Vagina (tissue), 2 donors: ENCODE measurements at regions of chr13 and their contacts with region 1.

Region 1: DNA sequence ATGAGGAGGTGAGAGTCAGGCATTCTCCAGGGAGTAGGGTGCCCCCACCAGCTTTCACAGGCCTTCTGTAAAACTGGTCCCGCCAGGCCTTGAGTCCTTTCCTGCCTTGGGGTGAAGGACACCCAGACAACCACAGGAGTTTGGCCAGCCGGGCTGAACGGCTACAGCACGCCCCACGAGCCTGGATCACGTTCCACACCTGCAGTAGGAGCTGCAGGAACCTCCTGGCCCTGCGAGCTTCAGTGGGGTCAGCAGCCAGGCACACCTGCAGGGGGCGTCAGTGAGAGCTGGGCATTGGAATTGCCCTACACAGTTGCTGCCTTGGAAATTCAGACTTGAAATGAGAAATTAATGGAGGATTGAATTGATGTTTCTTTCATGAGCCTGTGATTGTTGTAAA is 45.7 kb downstream of the COL4A2 start:
- DNase-seq: no peak
- H3K4me3 ChIP-seq: no peak overlapping the region
- H3K27ac ChIP-seq: no peak overlapping the region
- H3K4me1 ChIP-seq: peaks cover 11% of the 10 kb centered on the region
- H3K27me3 ChIP-seq: no peaks in the 10 kb centered on the region
- CTCF ChIP-seq: no peak
- POLR2A ChIP-seq: no peak

Region 2: DNA sequence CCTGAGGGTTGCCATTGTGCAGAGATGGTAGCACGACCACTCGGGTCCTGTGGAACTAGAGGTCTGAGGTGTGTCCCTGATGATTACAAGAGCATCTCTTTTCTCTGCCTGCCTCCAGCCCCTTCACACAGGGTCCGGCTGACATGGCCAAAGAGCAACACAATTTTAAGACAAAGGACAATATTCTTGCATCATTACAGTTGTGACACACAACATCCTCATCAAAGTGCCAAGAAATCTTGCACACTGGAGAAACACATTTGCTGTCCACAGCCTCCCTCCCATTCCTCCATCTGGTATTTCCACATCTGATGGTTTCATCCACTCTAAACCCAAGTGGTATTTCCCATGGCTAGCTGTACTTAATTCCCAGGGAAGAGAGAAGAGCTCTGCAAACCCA is 58.6 kb before region 1 on chr13:
- intact Hi-C with region 1: no loop called
- DNase-seq: no peak
- H3K4me3 ChIP-seq: no peak overlapping the region
- H3K27ac ChIP-seq: no peak overlapping the region
- H3K4me1 ChIP-seq: peaks cover 50% of the 10 kb centered on the region
- H3K27me3 ChIP-seq: no peaks in the 10 kb centered on the region
- CTCF ChIP-seq: no peak
- POLR2A ChIP-seq: no peak

Region 3: GRCh38 chr13:111187960-111188541 is 835.3 kb after region 1 on chr13:
- intact Hi-C with region 1: loop called (anchors 5 kb)
- DNase-seq: no peak
- H3K4me3 ChIP-seq: no peak overlapping the region
- H3K27ac ChIP-seq: peak overlapping the region; percentile 34
- H3K4me1 ChIP-seq: peaks cover 74% of the 10 kb centered on the region
- H3K27me3 ChIP-seq: no peaks in the 10 kb centered on the region
- CTCF ChIP-seq: no peak
- POLR2A ChIP-seq: no peak